Activated CD8-positive, alpha-beta T cell treated with anti-CD3 and anti-CD28 coated beads, Interleukin-2, amount 10 ng/mL, durations not matched to agents 7 days and 5 days (primary cell): ENCODE measurements at regions of chr12 and their contacts with region 1.

Region 1: DNA sequence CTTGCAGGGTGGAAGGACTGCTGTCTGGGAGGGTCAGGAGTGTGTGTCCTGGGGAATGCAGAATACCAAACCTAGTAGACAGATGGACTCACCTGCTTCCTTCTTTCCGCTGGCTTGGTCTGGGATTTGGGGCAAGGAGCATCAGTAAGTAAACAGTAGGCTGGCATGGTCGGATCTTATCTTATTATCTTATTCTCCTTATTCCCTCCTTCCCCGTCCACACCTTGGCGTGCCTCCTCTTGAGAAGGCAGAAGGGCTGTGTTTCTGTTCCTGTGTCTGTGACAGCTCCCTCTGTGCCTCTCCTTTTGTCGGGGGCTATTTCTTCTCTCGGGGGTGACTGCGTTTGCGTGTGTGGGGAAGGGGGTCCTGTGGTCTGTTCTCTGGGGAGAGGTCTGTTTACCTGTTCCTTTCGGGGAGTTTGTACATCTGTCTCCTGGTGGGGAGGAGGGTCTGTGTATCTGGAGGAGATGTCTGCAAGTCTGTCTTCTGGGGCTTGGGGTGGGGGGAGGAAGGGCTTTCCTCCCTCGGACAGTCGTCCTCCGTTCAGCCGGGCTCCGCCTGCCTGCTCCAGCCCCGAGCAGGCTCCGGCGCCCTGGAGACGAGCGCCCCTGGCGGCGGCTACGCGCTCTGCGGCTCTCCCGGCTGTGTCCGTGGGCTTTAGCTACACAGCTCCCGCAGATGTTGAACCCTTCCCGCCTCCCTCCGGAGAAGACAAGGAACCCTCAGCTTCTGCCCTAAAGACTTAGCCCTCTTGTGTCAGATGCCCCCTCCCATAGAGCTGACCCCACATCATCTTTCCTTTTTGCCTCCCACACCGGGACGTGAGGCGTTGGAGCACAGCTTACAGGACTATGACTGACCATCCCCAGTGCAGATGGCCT is 4.3 kb downstream of the KRT86 start:
- DNase-seq: peak; percentile 80
- ATAC-seq: peak; percentile 100
- H3K4me3 Mint-ChIP-seq: no peak overlapping the region
- H3K27ac Mint-ChIP-seq: no peak overlapping the region
- H3K4me1 Mint-ChIP-seq: peaks cover 21% of the 10 kb centered on the region
- H3K27me3 Mint-ChIP-seq: peaks cover 44% of the 10 kb centered on the region

Region 2: DNA sequence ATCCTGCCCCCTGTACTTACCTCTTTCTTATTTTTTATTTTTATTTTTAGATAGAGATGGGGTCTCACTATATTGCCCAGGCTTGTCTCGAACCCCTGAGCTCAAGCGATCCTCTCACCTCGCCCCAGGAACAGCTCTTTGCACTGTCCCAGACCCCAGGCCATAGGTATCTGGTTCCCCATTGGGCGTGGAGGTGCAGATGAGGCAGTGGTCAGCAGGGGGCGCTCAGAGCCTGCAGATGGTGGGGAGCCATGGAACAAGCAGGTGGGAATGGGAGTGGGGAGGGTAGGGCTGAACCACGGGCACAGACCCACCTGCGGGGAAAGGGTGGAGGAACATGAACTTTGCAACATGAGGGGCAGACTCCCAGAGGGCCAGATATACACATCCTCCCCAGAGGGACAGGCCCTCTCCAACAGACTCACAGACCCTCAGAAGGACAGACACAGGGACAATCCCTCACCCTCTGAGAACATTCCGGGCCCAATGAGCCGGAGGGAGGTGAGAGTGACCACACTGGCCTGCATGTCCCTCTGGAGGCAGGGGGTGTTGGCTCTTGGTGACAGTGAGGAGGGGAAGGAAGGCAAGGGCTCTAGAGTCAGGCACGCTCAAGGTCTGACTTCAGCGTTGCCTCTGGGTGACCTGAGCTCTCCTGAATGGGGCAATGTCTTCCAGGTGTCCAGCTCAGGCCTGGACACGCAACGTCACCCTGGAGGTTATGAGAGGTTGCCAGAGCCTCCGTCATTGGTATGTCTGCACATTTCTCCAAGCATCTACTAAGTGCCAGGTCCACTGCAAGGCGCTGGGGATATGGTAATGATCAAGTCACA is 121.8 kb before region 1 on chr12:
- CTCF ChIA-PET with region 1: interaction called, 18 read pairs
- POLR2A ChIA-PET with region 1: no interaction called
- DNase-seq: peak; percentile 81
- ATAC-seq: peak; percentile 54
- H3K4me3 Mint-ChIP-seq: no peak overlapping the region
- H3K27ac Mint-ChIP-seq: peak overlapping the region; percentile 33
- H3K4me1 Mint-ChIP-seq: peaks cover 27% of the 10 kb centered on the region
- H3K27me3 Mint-ChIP-seq: peaks cover 2% of the 10 kb centered on the region

Region 3: GRCh38 chr12:52213512-52214420 is 65.0 kb before region 1 on chr12:
- CTCF ChIA-PET with region 1: interaction called, 10 read pairs
- POLR2A ChIA-PET with region 1: no interaction called
- DNase-seq: peak; percentile 71
- ATAC-seq: peak; percentile 85
- H3K4me3 Mint-ChIP-seq: no peak overlapping the region
- H3K27ac Mint-ChIP-seq: no peak overlapping the region
- H3K4me1 Mint-ChIP-seq: no peaks in the 10 kb centered on the region
- H3K27me3 Mint-ChIP-seq: peaks cover 26% of the 10 kb centered on the region

Region 4: DNA sequence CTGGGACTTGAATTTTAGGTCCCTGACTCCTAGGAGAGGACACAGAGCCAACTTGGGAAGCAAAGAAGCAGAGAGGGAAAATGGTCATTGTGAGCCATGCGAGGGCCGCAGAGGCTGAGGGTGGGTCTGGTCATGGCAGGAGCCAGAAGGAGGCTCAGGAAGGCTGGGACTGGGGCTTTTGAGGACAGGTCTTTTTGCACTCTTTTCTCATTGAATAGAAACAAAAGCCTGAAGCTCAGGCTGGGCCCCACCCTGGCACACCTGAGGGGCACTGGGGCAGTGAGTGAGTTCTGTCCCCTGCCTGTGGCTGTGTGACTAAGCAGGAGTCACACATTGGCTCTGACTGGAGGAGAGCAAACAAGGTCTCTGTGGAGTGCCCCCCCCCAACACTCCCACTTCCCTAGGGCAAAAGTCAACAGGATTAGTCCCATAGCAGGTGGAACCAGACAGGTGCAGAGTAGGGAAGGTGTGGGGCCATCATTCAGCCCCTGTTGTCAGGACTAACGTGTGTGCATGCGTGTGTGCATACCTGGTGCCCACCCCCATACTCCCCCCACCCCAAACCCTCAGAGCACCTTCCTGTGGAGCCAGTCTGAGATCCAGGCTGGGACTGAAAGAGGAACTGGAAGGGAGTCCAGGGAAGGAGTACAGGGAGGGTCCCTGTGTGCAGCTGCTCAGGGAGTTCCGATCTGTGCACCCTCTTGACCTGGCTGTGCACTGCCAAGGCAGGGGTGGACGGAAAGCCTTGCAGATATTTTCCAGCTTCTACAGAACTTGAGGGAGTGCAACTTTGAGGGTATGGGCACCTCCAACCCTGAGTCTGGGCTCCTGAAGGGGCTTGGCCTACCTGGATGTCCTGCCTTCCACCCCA is 42.7 kb before region 1 on chr12:
- CTCF ChIA-PET with region 1: interaction called, 23 read pairs
- POLR2A ChIA-PET with region 1: no interaction called
- DNase-seq: no peak
- ATAC-seq: no peak
- H3K4me3 Mint-ChIP-seq: no peak overlapping the region
- H3K27ac Mint-ChIP-seq: no peak overlapping the region
- H3K4me1 Mint-ChIP-seq: no peaks in the 10 kb centered on the region
- H3K27me3 Mint-ChIP-seq: peaks cover 42% of the 10 kb centered on the region

Region 5: DNA sequence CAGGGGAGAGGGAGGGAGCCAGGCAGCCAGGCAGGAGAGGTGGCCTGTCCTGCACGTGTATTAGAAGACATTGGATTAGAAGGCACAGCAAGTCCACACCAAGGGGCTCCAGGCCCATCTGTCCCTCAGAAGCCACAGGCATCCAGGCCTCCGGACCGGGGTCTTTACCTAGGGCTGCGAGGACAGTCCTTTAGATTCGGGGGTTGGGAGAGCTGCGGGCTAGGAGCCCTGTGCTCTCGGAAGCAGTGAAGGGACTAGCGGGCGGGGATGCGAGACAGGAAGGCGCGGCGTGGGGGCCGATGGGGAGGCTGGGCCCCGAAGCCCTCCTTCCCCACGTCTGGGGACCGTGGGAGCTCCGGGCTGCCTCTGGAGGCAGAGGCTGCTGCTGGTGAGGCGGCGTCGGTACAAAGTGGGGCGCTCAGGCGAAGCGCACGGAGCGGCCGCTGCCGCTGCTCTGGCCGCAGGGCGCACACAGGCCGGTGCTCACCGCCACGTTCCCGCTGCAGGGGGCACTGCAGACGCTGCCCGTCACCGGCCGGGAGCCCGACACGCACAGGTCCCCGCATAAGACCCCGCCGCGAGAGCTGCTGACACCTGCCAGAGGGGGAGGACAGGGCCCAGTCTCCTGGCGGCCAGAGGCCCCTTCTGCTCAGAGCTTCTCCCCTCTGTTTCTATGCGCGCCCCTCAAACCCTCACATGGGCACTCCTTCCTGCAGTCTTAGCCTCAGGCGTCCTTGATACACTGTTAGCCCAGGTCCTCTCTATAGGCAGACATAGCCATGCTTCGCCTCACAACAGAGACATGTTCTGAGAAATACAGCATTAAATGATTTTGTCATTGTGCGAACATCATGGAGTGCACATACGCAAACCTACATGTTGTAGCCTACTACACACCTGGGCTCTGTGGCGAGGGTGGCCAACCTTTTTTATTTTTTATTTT is 28.5 kb before region 1 on chr12:
- CTCF ChIA-PET with region 1: interaction called, 33 read pairs
- POLR2A ChIA-PET with region 1: interaction called, 3 read pairs
- DNase-seq: no peak
- ATAC-seq: no peak
- H3K4me3 Mint-ChIP-seq: no peak overlapping the region
- H3K27ac Mint-ChIP-seq: peak overlapping the region; percentile 77
- H3K4me1 Mint-ChIP-seq: peaks cover 92% of the 10 kb centered on the region
- H3K27me3 Mint-ChIP-seq: peaks cover 16% of the 10 kb centered on the region

Region 6: GRCh38 chr12:52268212-52268611 is 10.6 kb before region 1 on chr12:
- CTCF ChIA-PET with region 1: interaction called, 40 read pairs
- POLR2A ChIA-PET with region 1: no interaction called
- DNase-seq: no peak
- ATAC-seq: no peak
- H3K4me3 Mint-ChIP-seq: no peak overlapping the region
- H3K27ac Mint-ChIP-seq: no peak overlapping the region
- H3K4me1 Mint-ChIP-seq: peaks cover 11% of the 10 kb centered on the region
- H3K27me3 Mint-ChIP-seq: peaks cover 32% of the 10 kb centered on the region

Region 7: GRCh38 chr12:52307836-52308805 is 29.3 kb after region 1 on chr12:
- CTCF ChIA-PET with region 1: interaction called, 24 read pairs
- POLR2A ChIA-PET with region 1: no interaction called
- DNase-seq: peak; percentile 72
- ATAC-seq: peak; percentile 92
- H3K4me3 Mint-ChIP-seq: peak overlapping the region; percentile 68
- H3K27ac Mint-ChIP-seq: no peak overlapping the region
- H3K4me1 Mint-ChIP-seq: peaks cover 32% of the 10 kb centered on the region
- H3K27me3 Mint-ChIP-seq: peaks cover 62% of the 10 kb centered on the region